GM12878 (cell line): ENCODE measurements at regions of chr2 and their contacts with region 1.

Region 1: DNA sequence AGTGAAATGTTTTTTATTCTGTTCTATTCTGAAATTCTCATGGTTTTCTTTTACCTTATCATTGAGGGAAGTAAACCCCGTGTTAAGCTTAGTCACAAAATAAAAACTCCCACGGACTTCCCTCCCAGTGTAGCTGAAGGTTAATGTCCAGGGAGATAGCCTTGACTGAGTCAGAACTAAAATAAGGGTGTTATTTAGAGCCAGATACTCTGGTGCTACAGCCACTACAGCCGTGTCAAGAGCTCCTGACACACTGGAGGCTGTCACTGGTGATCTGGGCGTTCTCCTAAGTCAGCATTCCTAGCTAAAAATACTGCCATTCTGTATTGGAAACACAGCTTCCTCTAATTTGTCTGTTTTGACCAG is 82.0 kb upstream of the RANBP2 start:
- DNase-seq: peak; percentile 46
- ATAC-seq: peak; percentile 72
- H3K4me3 ChIP-seq: no peak overlapping the region
- H3K27ac ChIP-seq: peak overlapping the region; percentile 6; the same call in 1 of the 2 replicates
- H3K4me1 ChIP-seq: peaks cover 20% of the 10 kb centered on the region
- H3K27me3 ChIP-seq: no peaks in the 10 kb centered on the region
- CTCF ChIP-seq: no peak
- EP300 ChIP-seq: peak; percentile 54 to 58
- POLR2A ChIP-seq: no peak
- RAD21 ChIP-seq: no peak

Region 2: GRCh38 chr2:108396845-108397244 is 240.4 kb before region 1 on chr2:
- CTCF ChIA-PET with region 1: interaction called, 41 read pairs
- POLR2A ChIA-PET with region 1: no interaction called
- RAD21 ChIA-PET with region 1: interaction called, 10 read pairs
- SMC1A ChIA-PET with region 1: interaction called, 23 read pairs
- in situ Hi-C with region 1: no loop called
- intact Hi-C with region 1: loop called (anchors 2 kb)
- DNase-seq: no peak
- ATAC-seq: peak; percentile 61
- H3K4me3 ChIP-seq: no peak overlapping the region
- H3K27ac ChIP-seq: no peak overlapping the region
- H3K4me1 ChIP-seq: no peaks in the 10 kb centered on the region
- H3K27me3 ChIP-seq: no peaks in the 10 kb centered on the region
- CTCF ChIP-seq: peak; percentile 40 to 51 (median 50); a peak in 5 of 6 replicates
- EP300 ChIP-seq: no peak
- POLR2A ChIP-seq: no peak
- RAD21 ChIP-seq: peak; percentile 83

Region 3: DNA sequence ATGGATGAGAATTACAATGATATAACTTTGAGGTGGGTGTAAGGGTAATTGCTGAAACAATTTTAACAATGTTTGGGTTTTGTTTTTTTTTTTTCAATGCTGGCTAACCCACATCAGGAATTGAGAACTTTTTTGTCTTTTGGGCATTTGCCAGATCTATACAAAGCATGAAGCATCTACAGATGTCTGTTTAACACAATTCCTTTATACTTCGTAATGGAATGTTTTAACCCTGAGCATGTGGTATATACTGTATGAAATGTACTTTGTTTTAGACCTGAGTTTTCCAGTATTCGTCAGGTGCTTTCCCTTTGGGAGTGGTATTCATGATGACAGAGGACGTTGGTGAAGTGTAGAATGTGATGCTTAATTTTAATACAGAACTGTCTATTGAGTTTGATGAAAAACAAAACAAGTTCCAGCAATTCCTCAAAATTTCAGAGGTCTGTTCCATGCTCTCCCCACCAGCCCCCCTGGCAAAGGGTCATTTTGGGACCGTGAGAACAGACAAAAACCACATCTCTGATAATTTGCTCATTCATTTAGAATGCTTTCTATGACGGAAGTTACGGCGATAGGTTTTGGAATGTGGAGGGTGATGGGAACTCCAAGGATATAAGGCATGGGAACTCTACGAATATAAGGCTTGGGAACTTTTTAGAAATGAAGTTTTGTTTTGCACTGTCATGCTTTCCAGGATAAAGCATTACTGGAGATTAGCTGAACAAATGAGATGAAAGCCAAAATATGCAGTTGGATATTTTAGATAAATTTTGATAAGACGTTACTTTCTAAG is 88.9 kb before region 1 on chr2:
- CTCF ChIA-PET with region 1: interaction called, 13 read pairs
- POLR2A ChIA-PET with region 1: no interaction called
- RAD21 ChIA-PET with region 1: interaction called, 5 read pairs
- SMC1A ChIA-PET with region 1: interaction called, 6 read pairs
- in situ Hi-C with region 1: no loop called
- intact Hi-C with region 1: no loop called
- DNase-seq: no peak
- ATAC-seq: no peak
- H3K4me3 ChIP-seq: no peak overlapping the region
- H3K27ac ChIP-seq: no peak overlapping the region
- H3K4me1 ChIP-seq: no peaks in the 10 kb centered on the region
- H3K27me3 ChIP-seq: no peaks in the 10 kb centered on the region
- CTCF ChIP-seq: no peak
- EP300 ChIP-seq: no peak
- POLR2A ChIP-seq: no peak
- RAD21 ChIP-seq: no peak

Region 4: GRCh38 chr2:108575132-108575966 is 61.9 kb before region 1 on chr2:
- CTCF ChIA-PET with region 1: interaction called, 118 read pairs
- POLR2A ChIA-PET with region 1: interaction called, 6 read pairs
- RAD21 ChIA-PET with region 1: interaction called, 28 read pairs
- SMC1A ChIA-PET with region 1: interaction called, 28 read pairs
- in situ Hi-C with region 1: no loop called
- intact Hi-C with region 1: no loop called
- DNase-seq: peak; percentile 70
- ATAC-seq: peak; percentile 92
- H3K4me3 ChIP-seq: peak overlapping the region; percentile 24; the same call in 1 of the 2 replicates
- H3K27ac ChIP-seq: no peak overlapping the region
- H3K4me1 ChIP-seq: peaks cover 13% of the 10 kb centered on the region
- H3K27me3 ChIP-seq: no peaks in the 10 kb centered on the region
- CTCF ChIP-seq: no peak
- EP300 ChIP-seq: peak; percentile 42 to 72; a peak in 1 of 4 replicates
- POLR2A ChIP-seq: no peak
- RAD21 ChIP-seq: no peak

Region 5: GRCh38 chr2:108594132-108594981 is 42.9 kb before region 1 on chr2:
- CTCF ChIA-PET with region 1: interaction called, 118 read pairs
- POLR2A ChIA-PET with region 1: interaction called, 9 read pairs
- RAD21 ChIA-PET with region 1: interaction called, 44 read pairs
- SMC1A ChIA-PET with region 1: interaction called, 55 read pairs
- in situ Hi-C with region 1: loop called (anchors 5 kb)
- intact Hi-C with region 1: loop called (anchors 1 kb)
- DNase-seq: no peak
- ATAC-seq: peak; percentile 94
- H3K4me3 ChIP-seq: no peak overlapping the region
- H3K27ac ChIP-seq: no peak overlapping the region; the same call in 1 of the 2 replicates
- H3K4me1 ChIP-seq: peaks cover 34% of the 10 kb centered on the region
- H3K27me3 ChIP-seq: no peaks in the 10 kb centered on the region
- CTCF ChIP-seq: no peak
- EP300 ChIP-seq: peak; percentile 94 to 98
- POLR2A ChIP-seq: no peak
- RAD21 ChIP-seq: no peak

Region 6: DNA sequence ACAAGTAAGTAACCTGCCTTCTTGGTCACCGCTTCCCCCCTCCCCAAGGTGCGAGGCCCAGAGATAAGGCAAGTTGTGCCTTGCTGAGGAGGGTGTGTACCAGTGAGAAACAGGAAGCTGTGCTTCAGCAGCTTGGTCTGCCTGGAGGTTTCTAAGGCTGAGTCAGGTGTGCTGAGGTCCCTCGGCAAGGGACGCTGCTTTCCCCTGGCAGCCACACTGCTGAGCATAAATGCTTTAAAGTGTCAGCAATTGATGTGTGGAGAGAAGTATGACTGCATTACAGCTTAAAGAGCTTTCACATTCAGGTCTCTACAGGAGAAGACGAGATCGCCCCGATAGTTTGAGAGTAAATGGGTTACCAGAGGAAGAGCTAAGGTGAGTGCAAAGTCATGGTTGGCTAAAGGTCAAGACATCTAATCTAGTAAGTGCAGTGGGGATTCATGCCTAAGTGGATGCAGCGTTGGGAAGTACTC is 16.2 kb before region 1 on chr2:
- CTCF ChIA-PET with region 1: interaction called, 441 read pairs
- POLR2A ChIA-PET with region 1: interaction called, 5 read pairs
- RAD21 ChIA-PET with region 1: interaction called, 441 read pairs
- SMC1A ChIA-PET with region 1: interaction called, 800 read pairs
- in situ Hi-C with region 1: no loop called
- intact Hi-C with region 1: no loop called
- DNase-seq: no peak
- ATAC-seq: peak; percentile 100
- H3K4me3 ChIP-seq: no peak overlapping the region
- H3K27ac ChIP-seq: no peak overlapping the region
- H3K4me1 ChIP-seq: peaks cover 16% of the 10 kb centered on the region
- H3K27me3 ChIP-seq: no peaks in the 10 kb centered on the region
- CTCF ChIP-seq: no peak
- EP300 ChIP-seq: peak in 1 of 2 experiments; percentile 38; a peak in 1 of 4 replicates
- POLR2A ChIP-seq: peak; percentile 43; the same call in 1 of the 2 replicates
- RAD21 ChIP-seq: no peak

Region 7: DNA sequence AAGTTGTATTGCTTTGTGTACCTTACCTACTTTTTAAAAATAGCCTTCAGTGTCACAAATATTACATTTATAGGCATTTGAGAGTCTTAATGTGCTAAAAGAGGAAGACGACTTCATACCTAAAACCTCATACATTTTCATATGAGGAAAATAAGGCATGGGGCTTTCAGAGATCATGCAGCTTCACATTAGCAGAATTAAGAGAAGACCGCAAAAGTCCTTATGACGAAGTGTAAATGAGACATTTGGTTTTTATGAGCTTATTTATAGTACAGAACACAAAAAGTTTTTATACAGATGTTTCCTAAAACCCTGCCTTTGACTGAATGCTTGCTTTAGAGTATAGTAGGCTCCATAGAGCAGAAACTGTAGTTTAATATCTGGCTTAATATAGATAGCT is 139.2 kb after region 1 on chr2:
- CTCF ChIA-PET with region 1: no interaction called
- POLR2A ChIA-PET with region 1: no interaction called
- RAD21 ChIA-PET with region 1: interaction called, 11 read pairs
- SMC1A ChIA-PET with region 1: interaction called, 4 read pairs
- in situ Hi-C with region 1: no loop called
- intact Hi-C with region 1: no loop called
- DNase-seq: peak; percentile 62
- ATAC-seq: peak; percentile 93
- H3K4me3 ChIP-seq: no peak overlapping the region
- H3K27ac ChIP-seq: peak overlapping the region; percentile 74
- H3K4me1 ChIP-seq: peaks cover 19% of the 10 kb centered on the region
- H3K27me3 ChIP-seq: no peaks in the 10 kb centered on the region
- CTCF ChIP-seq: no peak
- EP300 ChIP-seq: peak; percentile 93 to 95; a peak in 3 of 4 replicates
- POLR2A ChIP-seq: no peak
- RAD21 ChIP-seq: no peak